HEK293T (cell line): ENCODE measurements at regions of chr11 and their contacts with region 1.

Region 1: DNA sequence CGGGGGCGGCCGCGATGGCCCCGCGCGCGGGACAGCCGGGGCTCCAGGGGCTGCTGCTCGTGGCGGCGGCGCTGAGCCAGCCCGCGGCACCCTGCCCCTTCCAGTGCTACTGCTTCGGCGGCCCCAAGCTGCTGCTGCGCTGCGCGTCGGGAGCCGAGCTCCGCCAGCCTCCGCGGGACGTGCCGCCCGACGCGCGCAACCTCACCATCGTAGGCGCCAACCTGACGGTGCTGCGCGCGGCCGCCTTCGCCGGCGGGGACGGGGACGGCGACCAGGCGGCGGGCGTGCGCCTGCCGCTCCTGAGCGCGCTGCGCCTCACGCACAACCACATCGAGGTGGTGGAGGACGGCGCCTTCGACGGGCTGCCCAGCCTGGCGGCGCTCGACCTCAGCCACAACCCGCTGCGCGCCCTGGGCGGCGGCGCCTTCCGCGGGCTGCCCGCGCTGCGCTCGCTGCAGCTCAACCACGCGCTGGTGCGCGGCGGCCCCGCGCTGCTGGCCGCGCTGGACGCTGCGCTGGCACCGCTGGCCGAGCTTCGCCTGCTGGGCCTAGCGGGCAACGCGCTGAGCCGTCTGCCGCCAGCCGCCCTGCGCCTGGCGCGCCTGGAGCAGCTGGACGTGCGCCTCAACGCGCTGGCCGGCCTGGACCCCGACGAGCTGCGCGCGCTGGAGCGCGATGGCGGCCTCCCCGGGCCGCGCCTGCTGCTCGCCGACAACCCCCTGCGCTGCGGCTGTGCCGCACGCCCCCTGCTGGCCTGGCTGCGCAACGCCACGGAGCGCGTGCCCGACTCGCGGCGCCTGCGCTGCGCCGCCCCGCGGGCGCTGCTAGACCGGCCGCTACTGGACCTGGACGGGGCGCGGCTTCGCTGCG is 697 bp downstream of the TPBGL start:
- DNase-seq: peak; percentile 96

Region 2: GRCh38 chr11:75182669-75183068 is 58.6 kb before region 1 on chr11:
- CTCF ChIA-PET with region 1: no interaction called
- POLR2A ChIA-PET with region 1: no interaction called
- DNase-seq: no peak

Region 3: DNA sequence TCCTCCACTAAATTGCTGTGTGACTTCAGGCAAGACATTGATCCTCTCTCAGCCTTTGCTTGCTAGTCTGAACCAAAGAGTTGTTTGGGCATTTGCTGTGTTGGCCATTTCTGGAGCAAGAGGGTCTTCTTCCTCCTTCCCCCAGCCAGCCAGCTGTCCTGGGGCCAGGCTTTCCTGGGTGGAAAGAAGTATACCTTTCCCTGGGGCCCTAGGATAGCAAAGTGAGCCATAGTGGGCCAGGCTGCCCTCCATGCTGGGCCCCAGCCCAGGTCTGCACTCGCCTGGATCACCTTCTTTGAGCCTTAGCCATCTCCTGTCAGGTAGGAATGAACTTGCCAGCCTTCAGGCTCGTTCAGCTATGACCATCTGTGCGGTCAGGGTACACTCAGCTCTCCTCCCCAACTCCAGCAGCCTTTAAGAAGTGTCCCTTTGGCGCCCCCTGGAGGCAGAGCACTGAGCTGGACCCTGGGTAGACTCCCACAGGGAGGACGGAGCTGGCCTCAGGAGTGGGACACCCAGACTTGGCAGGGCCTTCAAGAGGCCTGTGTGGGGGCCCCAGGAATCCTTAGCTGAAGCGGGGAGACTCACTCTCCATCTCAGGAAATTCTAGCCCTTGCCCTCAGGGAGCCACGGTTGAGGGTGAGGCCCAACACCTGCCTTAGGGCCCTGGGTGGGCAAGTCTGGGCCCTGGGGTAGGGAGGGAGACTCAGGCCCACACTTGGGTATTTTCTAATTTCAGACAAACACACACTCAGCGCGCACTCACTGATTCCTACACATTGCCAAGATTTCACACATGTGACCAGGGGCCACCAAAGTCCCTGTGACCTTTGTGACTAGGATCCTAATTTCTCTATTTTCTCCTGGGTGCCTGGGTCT is 36.3 kb before region 1 on chr11:
- CTCF ChIA-PET with region 1: interaction called, 10 read pairs
- POLR2A ChIA-PET with region 1: no interaction called
- DNase-seq: peak; percentile 86

Region 4: DNA sequence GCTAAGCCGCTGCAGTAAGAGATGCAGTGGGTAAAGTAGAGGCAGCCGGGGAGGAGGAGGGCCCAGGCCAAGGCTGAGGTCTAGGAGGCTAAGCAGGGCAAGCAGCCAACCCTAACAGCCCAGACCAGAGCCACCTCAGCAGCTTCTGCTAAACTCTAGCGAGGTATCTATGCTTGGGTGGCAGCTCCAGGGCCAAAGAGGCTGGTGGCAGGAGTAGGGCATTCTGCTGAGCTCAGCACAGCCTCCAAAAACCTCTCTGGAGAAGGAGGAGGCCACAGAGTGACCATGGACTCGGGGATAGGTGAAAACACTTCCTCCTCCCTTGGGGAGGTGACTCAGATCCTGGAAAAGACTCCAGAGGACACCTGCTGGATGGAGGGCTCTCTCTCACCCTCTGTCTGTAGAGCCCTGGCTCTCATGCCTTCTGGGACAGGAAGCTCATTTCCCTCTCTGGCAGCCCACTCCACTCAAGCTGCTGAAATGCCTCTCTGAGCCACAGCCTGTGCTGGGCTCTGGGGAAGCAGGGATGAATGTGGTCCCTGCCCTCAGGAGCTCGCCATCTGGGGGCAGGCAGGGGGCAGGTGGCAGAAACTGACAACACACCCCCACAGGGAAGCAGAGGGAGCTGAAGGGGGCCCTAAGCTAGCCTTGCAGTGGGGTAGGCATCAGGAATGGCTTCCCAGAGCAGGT is 17.2 kb before region 1 on chr11:
- CTCF ChIA-PET with region 1: no interaction called
- POLR2A ChIA-PET with region 1: no interaction called
- DNase-seq: no peak